ENCODE measurements at regions of chr22 and their contacts with region 1.

Region 1: DNA sequence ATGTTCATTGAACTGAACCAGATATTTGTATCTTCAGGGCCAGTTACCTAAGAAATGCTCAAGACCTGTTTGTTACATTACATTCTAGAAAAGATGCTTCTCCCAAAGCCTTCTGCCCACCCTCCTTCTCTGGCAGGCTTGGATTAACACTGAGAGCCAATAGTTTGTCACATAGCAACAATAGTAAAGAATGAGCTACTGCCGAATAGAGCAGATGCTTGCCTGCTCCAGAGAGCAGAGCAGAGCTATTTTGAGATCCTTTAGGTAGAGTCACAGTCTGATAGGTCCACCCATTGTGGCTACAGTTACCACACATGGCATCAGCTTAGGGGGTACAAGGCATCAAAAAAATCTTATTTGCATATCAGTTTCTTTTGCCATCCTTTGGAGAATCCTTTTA is 13.5 kb upstream of the EP300 start:
- DNase-seq: no peak
- ATAC-seq: peak; percentile 90
- H3K4me3 Mint-ChIP-seq: peak overlapping the region; percentile 35
- H3K27ac Mint-ChIP-seq: peak overlapping the region; percentile 37
- H3K4me1 Mint-ChIP-seq: peaks cover 25% of the 10 kb centered on the region
- H3K27me3 Mint-ChIP-seq: no peaks in the 10 kb centered on the region
- CTCF ChIP-seq: no peak

Region 2: GRCh38 chr22:41062146-41062545 is 16.8 kb before region 1 on chr22:
- CTCF ChIA-PET with region 1: no interaction called
- POLR2A ChIA-PET with region 1: interaction called, 10 read pairs
- intact Hi-C with region 1: no loop called
- DNase-seq: no peak
- ATAC-seq: no peak
- H3K4me3 Mint-ChIP-seq: no peak overlapping the region
- H3K27ac Mint-ChIP-seq: no peak overlapping the region
- H3K4me1 Mint-ChIP-seq: no peaks in the 10 kb centered on the region
- H3K27me3 Mint-ChIP-seq: no peaks in the 10 kb centered on the region
- CTCF ChIP-seq: no peak

Measured in activated B cell treated with CpG ODN at 0.5 μM for 24 hours (primary cell).